ENCODE measurements at regions of chr9 and their contacts with region 1.

Region 1: GRCh38 chr9:90921111-90921510 is 119.5 kb downstream of the SYK start:
- DNase-seq: no peak
- ATAC-seq: no peak
- H3K4me3 ChIP-seq: no peak overlapping the region
- H3K27ac ChIP-seq: no peak overlapping the region
- H3K4me1 ChIP-seq: peaks cover 17% of the 10 kb centered on the region
- H3K27me3 ChIP-seq: no peaks in the 10 kb centered on the region; a peak in 2 of 4 replicates
- CTCF ChIP-seq: no peak
- EP300 ChIP-seq: no peak
- POLR2A ChIP-seq: no peak
- RAD21 ChIP-seq: no peak

Region 2: DNA sequence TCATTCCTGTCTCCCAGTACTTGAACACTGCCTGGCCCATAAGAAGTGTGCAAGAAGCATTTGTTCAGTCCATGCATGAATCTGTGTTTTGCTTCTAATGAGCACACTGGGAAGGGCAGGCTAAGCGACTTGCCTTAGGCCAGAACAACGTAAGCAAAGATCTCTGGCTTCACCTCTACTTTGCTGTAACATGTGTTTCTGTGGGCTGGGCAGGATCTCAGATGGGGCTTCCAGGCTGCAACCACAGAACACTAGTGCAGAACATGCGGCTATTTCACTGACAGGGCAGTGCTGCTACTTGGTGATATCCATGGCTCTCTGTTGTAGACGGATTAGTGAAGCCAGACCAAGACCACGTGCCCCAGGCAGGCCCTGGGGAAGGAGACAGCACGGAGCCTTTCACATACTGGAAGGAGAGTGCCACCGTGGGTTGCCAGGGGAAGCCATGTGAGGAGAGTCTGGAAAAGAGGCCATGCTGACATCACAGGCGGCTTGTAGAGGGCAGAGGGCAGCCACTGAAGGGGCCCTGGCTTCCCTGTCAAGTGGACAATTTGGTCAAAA is 288.4 kb before region 1 on chr9:
- CTCF ChIA-PET with region 1: no interaction called
- POLR2A ChIA-PET with region 1: no interaction called
- RAD21 ChIA-PET with region 1: no interaction called
- SMC1A ChIA-PET with region 1: no interaction called
- in situ Hi-C with region 1: no loop called
- intact Hi-C with region 1: no loop called
- DNase-seq: no peak
- ATAC-seq: no peak
- H3K4me3 ChIP-seq: no peak overlapping the region
- H3K27ac ChIP-seq: no peak overlapping the region
- H3K4me1 ChIP-seq: no peaks in the 10 kb centered on the region
- H3K27me3 ChIP-seq: no peaks in the 10 kb centered on the region; a peak in 2 of 4 replicates
- CTCF ChIP-seq: no peak
- EP300 ChIP-seq: no peak
- POLR2A ChIP-seq: no peak
- RAD21 ChIP-seq: no peak

Region 3: DNA sequence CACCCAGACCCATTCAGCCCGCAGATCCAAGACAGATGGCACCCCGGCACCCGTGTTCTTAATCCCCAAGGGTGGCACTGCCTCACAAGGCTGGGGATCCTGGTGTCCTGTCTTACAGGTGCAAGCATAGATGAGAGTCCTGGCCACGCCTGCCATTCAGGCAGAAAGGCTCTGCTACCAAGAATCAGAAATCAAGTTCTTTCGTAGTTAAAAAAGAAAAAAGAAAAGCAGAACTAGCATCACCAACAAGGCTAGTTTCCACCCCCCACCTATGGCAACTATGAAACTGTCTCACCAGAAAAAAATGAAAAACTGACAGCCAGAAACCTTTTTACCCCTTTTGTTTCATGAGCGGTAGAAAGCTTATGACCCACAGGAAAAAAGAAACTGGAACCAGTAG is 50.9 kb after region 1 on chr9:
- CTCF ChIA-PET with region 1: no interaction called
- POLR2A ChIA-PET with region 1: no interaction called
- RAD21 ChIA-PET with region 1: no interaction called
- SMC1A ChIA-PET with region 1: no interaction called
- in situ Hi-C with region 1: no loop called
- intact Hi-C with region 1: loop called (anchors 2 kb)
- DNase-seq: peak; percentile 30
- ATAC-seq: peak; percentile 64
- H3K4me3 ChIP-seq: no peak overlapping the region
- H3K27ac ChIP-seq: 0 out of 2 replicates have a peak overlapping the region, but pooled peaks have one; percentile 14
- H3K4me1 ChIP-seq: peaks cover 13% of the 10 kb centered on the region
- H3K27me3 ChIP-seq: no peaks in the 10 kb centered on the region; a peak in 1 of 4 replicates
- CTCF ChIP-seq: no peak
- EP300 ChIP-seq: no peak
- POLR2A ChIP-seq: no peak
- RAD21 ChIP-seq: no peak

Region 4: DNA sequence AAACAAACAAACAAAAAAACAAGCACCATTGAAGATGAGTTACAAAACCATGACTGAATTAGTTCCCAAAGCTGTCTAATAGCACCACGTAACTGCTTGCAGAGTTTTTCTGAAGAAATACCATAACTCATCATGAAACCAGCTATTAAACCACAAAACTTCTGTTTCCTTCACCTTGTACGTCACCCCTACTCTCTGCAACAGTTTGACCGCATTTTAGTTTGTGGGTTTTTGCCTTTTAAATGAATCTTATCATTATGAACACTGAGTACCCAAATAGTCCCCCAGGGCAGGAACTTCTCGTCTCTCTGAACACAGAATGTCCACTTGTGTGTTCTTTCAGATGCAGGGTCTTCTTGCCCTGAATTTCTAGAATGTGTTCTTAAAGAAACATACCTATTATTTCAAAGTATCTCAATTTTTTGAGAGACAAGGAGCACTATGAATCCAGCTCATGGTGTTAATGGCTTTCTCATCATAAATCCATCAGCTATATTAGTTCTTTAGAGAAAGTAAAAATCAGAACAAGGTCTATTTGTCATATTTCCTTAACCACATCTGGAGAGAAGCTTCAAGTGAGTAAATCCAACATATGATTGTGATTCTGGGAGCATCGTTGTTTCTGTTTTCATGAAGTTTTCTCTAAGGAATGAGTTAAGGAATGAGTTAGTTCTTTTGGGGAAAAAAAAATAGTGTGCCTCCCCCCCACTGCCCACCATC is 230.0 kb after region 1 on chr9:
- CTCF ChIA-PET with region 1: no interaction called
- POLR2A ChIA-PET with region 1: no interaction called
- RAD21 ChIA-PET with region 1: no interaction called
- SMC1A ChIA-PET with region 1: no interaction called
- in situ Hi-C with region 1: no loop called
- intact Hi-C with region 1: loop called (anchors 5 kb)
- DNase-seq: peak; percentile 72
- ATAC-seq: peak; percentile 75
- H3K4me3 ChIP-seq: 0 out of 2 replicates have a peak overlapping the region, but pooled peaks have one; percentile 3
- H3K27ac ChIP-seq: peak overlapping the region; percentile 35; the same call in 1 of the 2 replicates
- H3K4me1 ChIP-seq: peaks cover 37% of the 10 kb centered on the region
- H3K27me3 ChIP-seq: peaks cover 0 to 7% of the 10 kb centered on the region in 2 experiments; a peak in 1 of 4 replicates
- CTCF ChIP-seq: no peak
- EP300 ChIP-seq: peak; percentile 94 to 95; a peak in 2 of 4 replicates
- POLR2A ChIP-seq: no peak
- RAD21 ChIP-seq: no peak